ENCODE measurements at regions of chr2 and their contacts with region 1.

Region 1: DNA sequence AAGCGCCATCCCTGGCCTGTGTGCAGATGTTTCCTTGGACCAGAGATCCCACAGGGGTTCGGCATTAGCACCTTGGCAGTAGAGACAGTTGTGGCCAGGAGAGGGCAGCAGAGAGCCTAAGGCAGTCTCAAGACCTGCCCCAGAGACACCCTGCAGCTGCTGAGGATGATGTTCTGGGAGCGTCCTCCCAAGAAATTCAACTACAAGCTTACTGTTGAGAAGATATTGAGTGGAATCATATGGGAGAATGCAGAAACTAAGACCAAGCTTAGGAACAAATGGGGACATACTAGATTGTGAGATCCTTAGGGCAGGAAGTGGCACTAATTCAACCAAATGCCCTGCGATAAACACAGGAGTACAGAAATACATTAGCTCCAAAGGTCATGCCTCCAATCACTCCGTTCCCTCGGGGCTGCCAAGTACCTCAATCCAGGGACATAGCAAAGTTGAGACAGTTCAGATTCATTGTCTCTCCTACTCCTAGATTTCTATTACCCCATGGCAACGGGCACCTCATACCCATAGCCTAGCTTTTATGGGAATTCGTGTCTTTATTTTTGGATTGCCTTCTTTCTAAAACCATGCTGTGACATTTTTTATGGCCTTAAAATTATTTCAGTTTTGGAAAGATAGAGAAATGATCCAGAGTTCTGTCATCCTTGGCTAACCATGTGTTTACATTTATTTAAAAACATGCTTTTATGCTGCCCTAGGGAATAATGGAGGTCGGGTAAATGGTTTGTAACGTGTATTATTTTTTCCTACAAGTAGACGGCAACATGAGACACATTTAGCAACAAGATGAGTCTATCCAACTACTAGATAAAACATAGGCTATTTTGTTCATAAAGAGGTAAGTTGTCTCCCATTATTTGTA is 2.2 kb upstream of the ERMN start:
- DNase-seq: peak; percentile 72 to 87 (median 79)
- ATAC-seq: peak; percentile 79 to 96 (median 91)
- H3K4me3 ChIP-seq: no peak overlapping the region
- H3K27ac ChIP-seq: no peak overlapping the region
- H3K4me1 ChIP-seq: peaks cover 0 to 11% (median 0%) of the 10 kb centered on the region in 12 donors
- H3K27me3 ChIP-seq: no peaks in the 10 kb centered on the region
- CTCF ChIP-seq: peak; percentile 75 to 94 (median 89)
- POLR2A ChIP-seq: no peak

Region 2: DNA sequence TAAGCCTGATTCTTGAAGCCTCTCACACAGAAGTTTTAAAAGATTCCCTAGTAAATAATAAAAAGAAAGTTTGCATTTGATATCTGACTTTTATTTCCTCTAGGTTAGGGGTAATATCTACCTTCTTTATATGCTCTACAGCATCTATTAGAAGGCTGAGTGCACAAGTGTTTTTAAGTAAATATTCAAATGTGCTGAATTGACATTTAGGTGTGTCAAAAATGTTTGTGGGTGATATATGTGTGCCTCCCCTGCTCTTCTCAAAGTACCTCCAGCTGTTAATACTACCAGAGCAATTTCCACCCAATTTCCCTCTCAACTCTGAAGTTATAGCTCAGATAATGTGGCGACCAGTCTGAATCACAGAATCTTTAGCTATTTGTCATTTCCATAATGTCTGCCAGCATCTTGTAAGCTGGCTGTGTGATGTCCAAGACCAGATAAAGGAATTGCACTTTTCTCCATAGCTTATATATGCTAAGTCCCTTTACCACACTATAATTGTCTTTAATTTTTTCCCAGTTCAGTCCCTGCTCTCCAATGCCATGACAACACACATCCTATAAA is 22.2 kb after region 1 on chr2:
- intact Hi-C with region 1: no loop called
- DNase-seq: no peak
- ATAC-seq: no peak
- H3K4me3 ChIP-seq: no peak overlapping the region
- H3K27ac ChIP-seq: no peak overlapping the region
- H3K4me1 ChIP-seq: no peaks in the 10 kb centered on the region
- H3K27me3 ChIP-seq: no peaks in the 10 kb centered on the region
- CTCF ChIP-seq: no peak
- POLR2A ChIP-seq: no peak

Region 3: DNA sequence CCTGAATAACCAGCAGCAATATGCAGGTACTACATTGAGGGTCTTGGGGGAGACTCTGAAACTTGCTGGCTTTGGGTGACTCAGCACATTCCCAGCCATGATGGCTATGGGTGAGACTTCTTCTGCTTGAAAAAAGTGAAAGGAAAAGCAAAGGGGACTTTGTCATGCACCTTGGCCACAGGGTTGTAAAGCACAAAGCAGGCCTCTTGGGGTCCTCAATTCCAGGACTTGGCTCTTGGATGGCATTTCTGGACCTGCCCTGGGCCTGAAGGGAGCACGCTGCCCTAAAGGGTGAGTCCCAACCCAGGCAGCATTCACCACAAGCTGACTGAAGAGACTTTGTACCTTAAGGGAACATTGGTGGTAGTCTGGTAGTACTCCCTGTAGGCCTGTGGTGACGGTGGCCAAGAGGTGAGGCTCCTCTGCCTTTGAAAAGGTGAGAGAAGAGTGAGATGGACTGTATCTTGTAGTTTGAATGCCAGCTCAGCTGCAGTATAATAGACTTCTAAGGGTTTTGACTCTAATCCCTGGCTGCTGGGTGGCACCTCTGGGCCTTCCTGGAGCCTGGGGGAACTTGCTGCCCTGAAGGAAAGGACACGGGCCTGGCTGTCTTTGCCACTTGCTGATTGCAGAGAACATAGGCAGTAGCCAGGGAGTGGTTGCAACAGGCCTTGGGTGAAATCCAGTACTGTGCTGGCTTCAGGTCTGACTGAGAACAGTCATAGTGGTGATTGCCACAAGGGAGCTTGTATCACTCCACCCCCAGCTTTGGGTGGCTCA is 152.5 kb after region 1 on chr2:
- intact Hi-C with region 1: loop called in 2 of 10 experiments (anchors 10 kb)
- DNase-seq: peak; percentile 56 to 89 (median 75)
- ATAC-seq: peak; percentile 93 to 99 (median 98)
- H3K4me3 ChIP-seq: no peak overlapping the region
- H3K27ac ChIP-seq: peak overlapping the region; percentile 42 to 77 (median 56)
- H3K4me1 ChIP-seq: peaks cover 0 to 16% (median 6%) of the 10 kb centered on the region in 12 donors
- H3K27me3 ChIP-seq: no peaks in the 10 kb centered on the region
- CTCF ChIP-seq: no peak
- POLR2A ChIP-seq: no peak

Region 4: DNA sequence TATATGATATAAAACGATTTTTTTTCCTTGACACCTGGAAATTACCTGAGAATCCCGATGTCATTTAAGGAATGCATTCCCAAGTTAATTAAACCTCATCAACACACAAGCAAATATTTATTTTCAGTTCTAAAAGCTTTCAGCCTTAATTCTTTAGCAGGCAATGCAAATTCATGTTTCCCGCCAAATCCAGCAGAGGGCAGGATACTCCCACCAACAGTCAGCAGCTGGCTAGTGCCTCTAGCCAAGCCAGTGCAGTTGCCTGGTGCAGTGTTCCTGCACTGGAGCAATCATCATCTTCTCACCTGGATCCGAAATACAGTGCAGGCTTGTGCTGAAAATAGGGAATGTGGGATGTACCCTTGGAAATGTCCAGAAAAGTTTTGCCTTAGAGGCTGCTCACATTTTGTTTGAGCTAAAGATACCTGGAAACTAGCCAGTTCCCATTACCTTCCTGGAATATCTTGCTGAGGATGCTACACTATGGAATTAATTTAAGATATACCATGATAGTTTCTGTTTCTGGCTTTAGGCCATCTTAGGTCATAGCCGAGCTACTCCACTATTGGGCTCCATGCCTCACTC is 164.4 kb after region 1 on chr2:
- intact Hi-C with region 1: loop called in 6 of 10 experiments (anchors 5 to 10 kb)
- DNase-seq: peak; percentile 52 to 70 (median 64)
- ATAC-seq: peak in 3 of 4 donors; percentile 75 to 88 (median 85)
- H3K4me3 ChIP-seq: no peak overlapping the region
- H3K27ac ChIP-seq: no peak overlapping the region
- H3K4me1 ChIP-seq: no peaks in the 10 kb centered on the region
- H3K27me3 ChIP-seq: no peaks in the 10 kb centered on the region
- CTCF ChIP-seq: peak; percentile 53 to 80 (median 70)
- POLR2A ChIP-seq: no peak

Region 5: DNA sequence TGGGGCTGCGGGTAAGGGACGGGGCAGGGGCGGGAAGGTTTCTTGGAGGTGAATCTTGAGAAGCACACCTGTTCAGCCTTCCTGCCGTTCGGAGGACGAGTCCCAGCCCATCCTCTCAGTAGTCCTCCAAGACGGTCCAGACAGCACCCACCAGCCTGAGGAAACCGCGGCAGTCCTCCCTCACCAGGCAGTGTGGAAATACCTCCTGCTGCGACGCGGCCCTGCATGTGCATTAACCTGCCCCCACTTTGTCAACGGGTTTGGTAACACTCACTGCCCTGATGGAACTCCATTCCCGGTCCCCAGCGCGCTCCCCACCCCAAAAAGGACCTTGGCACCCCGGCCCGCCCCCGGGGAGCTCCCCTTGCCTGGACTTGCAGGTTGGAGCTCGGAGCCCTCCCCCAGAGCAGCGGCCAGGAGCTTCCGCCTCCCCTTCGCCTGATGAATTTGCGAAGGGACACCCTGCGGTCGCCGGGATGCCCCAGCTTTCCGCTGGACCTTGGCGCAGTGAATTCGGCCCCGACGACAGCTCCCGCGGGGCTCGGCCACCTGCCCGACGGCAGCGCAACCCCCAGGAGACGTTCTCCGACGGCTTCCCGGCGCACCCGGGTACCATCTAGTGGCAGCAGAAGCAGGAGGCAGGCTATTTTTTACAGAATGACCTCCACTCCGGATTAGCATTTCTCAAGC is 269.3 kb after region 1 on chr2:
- intact Hi-C with region 1: loop called in 2 of 10 experiments (anchors 10 kb)
- DNase-seq: peak in 3 of 5 donors; percentile 8 to 34 (median 32)
- ATAC-seq: peak in 2 of 4 donors; percentile 44 to 49
- H3K4me3 ChIP-seq: peak overlapping the region in 3 of 12 donors; percentile 25 to 40 (median 26)
- H3K27ac ChIP-seq: no peak overlapping the region
- H3K4me1 ChIP-seq: no peaks in the 10 kb centered on the region
- H3K27me3 ChIP-seq: peaks cover 0 to 26% (median 3%) of the 10 kb centered on the region in 9 donors
- CTCF ChIP-seq: peak in 11 of 12 donors; percentile 20 to 55 (median 33)
- POLR2A ChIP-seq: no peak

Region 6: GRCh38 chr2:157777427-157777826 is 449.6 kb after region 1 on chr2:
- intact Hi-C with region 1: loop called in 1 of 10 experiments (anchors 10 kb)
- DNase-seq: peak in 1 of 5 donors; percentile 32
- ATAC-seq: no peak
- H3K4me3 ChIP-seq: no peak overlapping the region
- H3K27ac ChIP-seq: no peak overlapping the region
- H3K4me1 ChIP-seq: peaks cover 0 to 13% (median 9%) of the 10 kb centered on the region in 12 donors
- H3K27me3 ChIP-seq: no peaks in the 10 kb centered on the region
- CTCF ChIP-seq: peak; percentile 52 to 83 (median 73)
- POLR2A ChIP-seq: no peak